Mammary epithelial cell (primary cell): ENCODE measurements at regions of chr7 and their contacts with region 1.

Region 1: GRCh38 chr7:90595801-90596671 is at the start of gene CDK14:
- DNase-seq: peak; percentile 59
- H3K4me3 ChIP-seq: peak within 1 kb of the TSS; percentile 80 to 87 (median 83)
- H3K27ac ChIP-seq: peak within 1 kb of the TSS; percentile 63
- H3K4me1 ChIP-seq: peaks cover 21% of the 10 kb centered on the region
- H3K27me3 ChIP-seq: no peaks in the 10 kb centered on the region
- CTCF ChIP-seq: peak in 1 of 2 donors; percentile 56
- total RNA-seq, gene CDK14: 23.9 to 43.3 TPM

Region 2: DNA sequence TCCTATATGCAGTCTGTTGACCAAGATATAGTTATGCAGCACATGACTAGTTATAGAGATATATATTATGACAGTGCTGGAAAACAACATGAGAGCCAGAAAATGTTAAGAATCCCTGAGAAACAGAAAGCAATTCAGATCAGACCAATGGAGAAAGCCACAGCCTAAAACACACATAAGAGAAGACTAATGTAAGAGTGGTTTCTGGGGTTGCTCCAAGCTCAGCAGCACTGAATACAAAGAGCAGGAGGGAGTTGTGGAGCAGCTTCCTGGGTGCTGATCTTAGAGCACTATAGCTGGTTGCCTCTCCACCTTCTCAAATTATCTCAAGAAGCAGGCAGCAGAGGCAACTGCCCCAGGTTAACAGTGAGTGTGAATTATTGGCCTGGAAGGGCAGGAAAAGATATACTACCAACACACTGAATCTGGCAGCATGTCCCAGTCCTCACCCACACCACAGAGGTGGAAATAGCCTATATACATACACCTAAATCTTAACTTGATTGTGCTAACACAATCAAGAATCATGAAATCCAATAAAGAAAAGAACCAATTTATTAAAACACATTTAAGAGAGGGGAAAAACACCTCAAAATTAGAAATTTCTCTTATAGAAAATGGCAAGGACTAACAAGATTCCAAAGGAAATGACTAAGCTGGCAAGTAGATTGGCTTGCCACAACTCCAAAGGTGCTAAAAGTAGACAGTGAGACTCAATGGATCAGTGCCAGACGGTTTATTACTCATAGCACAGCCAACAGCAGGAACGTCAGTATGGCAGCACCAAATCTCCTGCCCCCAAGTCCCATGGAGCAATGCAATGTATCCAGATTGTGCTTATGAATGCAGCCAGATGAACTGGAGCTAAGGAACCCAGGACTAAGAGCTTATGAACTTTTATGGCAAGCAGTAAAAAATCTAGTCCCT is 121.5 kb before region 1 on chr7:
- CTCF ChIA-PET with region 1: no interaction called
- dilution Hi-C with region 1: no loop called
- in situ Hi-C with region 1: loop called in 1 of 2 experiments (anchors 10 kb)
- intact Hi-C with region 1: no loop called
- DNase-seq: peak; percentile 92
- H3K4me3 ChIP-seq: peak overlapping the region in 1 of 3 experiments; percentile 12
- H3K27ac ChIP-seq: peak overlapping the region; percentile 76
- H3K4me1 ChIP-seq: peaks cover 25% of the 10 kb centered on the region
- H3K27me3 ChIP-seq: no peaks in the 10 kb centered on the region
- CTCF ChIP-seq: no peak

Region 3: GRCh38 chr7:90488240-90488639 is 107.8 kb before region 1 on chr7:
- CTCF ChIA-PET with region 1: no interaction called
- dilution Hi-C with region 1: no loop called
- in situ Hi-C with region 1: no loop called
- intact Hi-C with region 1: no loop called
- DNase-seq: no peak
- H3K4me3 ChIP-seq: no peak overlapping the region
- H3K27ac ChIP-seq: no peak overlapping the region
- H3K4me1 ChIP-seq: peaks cover 6% of the 10 kb centered on the region
- H3K27me3 ChIP-seq: no peaks in the 10 kb centered on the region
- CTCF ChIP-seq: no peak

Region 4: GRCh38 chr7:90552521-90552920 is 43.5 kb before region 1 on chr7:
- CTCF ChIA-PET with region 1: interaction called, 4 read pairs
- dilution Hi-C with region 1: no loop called
- in situ Hi-C with region 1: no loop called
- intact Hi-C with region 1: loop called (anchors 2 kb)
- DNase-seq: peak; percentile 10
- H3K4me3 ChIP-seq: no peak overlapping the region
- H3K27ac ChIP-seq: no peak overlapping the region
- H3K4me1 ChIP-seq: no peaks in the 10 kb centered on the region
- H3K27me3 ChIP-seq: no peaks in the 10 kb centered on the region
- CTCF ChIP-seq: peak; percentile 20 to 43

Region 5: DNA sequence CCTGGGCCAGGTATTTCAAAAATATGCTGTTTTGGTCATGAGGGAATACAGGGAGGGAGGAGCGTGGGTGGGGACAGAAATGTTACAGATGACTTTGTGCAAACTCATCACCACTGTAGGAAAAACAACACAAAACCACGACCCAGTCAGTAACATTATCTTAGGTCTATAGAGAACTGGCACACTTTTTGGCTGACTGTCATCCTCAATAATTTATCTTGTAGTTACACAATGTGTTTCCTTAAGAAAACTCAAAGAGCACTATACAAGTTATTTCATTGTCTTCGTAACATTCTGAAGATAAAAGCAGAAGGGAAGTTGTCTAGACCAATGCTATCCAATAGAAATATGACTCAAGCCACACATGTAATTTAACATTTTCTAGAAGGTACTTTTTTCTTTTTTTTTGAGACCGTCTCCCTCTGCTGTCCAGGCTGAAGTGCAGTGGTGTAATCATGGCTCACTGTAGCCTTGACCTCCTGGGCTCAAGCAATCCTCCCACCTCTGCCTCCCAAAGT is 16.8 kb before region 1 on chr7:
- CTCF ChIA-PET with region 1: no interaction called
- dilution Hi-C with region 1: no loop called
- in situ Hi-C with region 1: no loop called
- intact Hi-C with region 1: loop called (anchors 1 kb)
- DNase-seq: peak; percentile 95
- H3K4me3 ChIP-seq: no peak overlapping the region
- H3K27ac ChIP-seq: peak overlapping the region; percentile 64
- H3K4me1 ChIP-seq: peaks cover 10% of the 10 kb centered on the region
- H3K27me3 ChIP-seq: no peaks in the 10 kb centered on the region
- CTCF ChIP-seq: peak; percentile 12 to 17

Region 6: GRCh38 chr7:90629297-90629918 is 33.4 kb after region 1 on chr7:
- CTCF ChIA-PET with region 1: interaction called, 3 read pairs
- dilution Hi-C with region 1: no loop called
- in situ Hi-C with region 1: no loop called
- intact Hi-C with region 1: loop called (anchors 1 kb)
- DNase-seq: peak; percentile 44
- H3K4me3 ChIP-seq: no peak overlapping the region
- H3K27ac ChIP-seq: no peak overlapping the region
- H3K4me1 ChIP-seq: peaks cover 20% of the 10 kb centered on the region
- H3K27me3 ChIP-seq: no peaks in the 10 kb centered on the region
- CTCF ChIP-seq: peak; percentile 68 to 75

Region 7: GRCh38 chr7:90759710-90760109 is 163.7 kb after region 1 on chr7:
- CTCF ChIA-PET with region 1: no interaction called
- dilution Hi-C with region 1: no loop called
- in situ Hi-C with region 1: no loop called
- intact Hi-C with region 1: no loop called
- DNase-seq: no peak
- H3K4me3 ChIP-seq: no peak overlapping the region
- H3K27ac ChIP-seq: no peak overlapping the region
- H3K4me1 ChIP-seq: no peaks in the 10 kb centered on the region
- H3K27me3 ChIP-seq: no peaks in the 10 kb centered on the region
- CTCF ChIP-seq: no peak